Activated CD4-positive, alpha-beta memory T cell treated with anti-CD3 and anti-CD28 coated beads, Interleukin-2, amount 10 ng/mL, durations not matched to agents 7 days and 5 days (primary cell): ENCODE measurements at regions of chr15 and their contacts with region 1.

Region 1: DNA sequence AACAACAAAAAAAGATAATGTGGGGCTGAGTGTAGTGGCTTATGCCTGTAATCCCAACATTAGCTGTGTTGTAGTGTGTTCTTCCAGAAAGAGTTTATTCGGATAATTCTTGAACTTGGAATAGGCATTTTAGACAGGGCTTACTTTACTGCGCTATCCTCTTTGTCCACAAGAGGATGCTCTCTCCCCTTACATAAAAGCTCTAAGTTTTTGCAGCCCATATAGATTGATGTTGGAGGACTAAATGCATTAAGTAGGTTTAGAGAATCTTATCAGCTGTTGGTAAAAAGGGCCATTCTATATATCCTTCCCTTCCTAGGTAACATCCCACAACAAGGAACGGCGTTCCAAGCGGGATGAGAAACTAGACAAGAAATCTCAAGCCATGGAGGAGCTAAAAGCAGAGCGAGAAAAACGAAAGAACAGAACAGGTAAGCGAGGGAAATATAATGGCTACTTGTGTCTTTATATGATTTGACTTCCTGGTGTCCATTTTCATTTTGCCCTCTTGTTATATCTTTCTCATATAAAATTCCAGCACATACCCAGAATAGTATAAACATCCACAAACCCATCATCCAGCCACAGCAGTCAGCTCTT is 27.8 kb upstream of the ITPKA start:
- DNase-seq: peak; percentile 17
- H3K4me3 Mint-ChIP-seq: no peak overlapping the region
- H3K27ac Mint-ChIP-seq: peak overlapping the region; percentile 48
- H3K4me1 Mint-ChIP-seq: peaks cover 14% of the 10 kb centered on the region
- H3K27me3 Mint-ChIP-seq: no peaks in the 10 kb centered on the region

Region 2: DNA sequence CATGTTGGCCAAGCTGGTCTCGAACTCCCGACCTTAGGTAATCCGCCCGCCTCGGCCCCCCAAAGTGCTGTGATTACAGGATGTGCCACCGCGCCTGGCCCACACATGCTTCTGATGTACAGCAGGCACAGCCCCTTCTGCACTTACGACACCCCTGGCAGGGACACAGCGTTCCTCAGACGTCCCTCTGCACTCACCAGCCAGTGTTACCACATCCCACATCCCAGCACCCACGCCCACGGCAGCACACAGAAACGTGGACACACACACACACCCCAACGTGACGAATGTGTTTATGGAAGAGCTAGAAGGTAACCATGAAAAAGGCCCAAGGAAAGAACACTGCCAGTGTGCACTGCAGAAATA is 78.7 kb after region 1 on chr15:
- CTCF ChIA-PET with region 1: interaction called, 10 read pairs
- POLR2A ChIA-PET with region 1: interaction called, 5 read pairs
- DNase-seq: no peak
- H3K4me3 Mint-ChIP-seq: peak overlapping the region; percentile 95
- H3K27ac Mint-ChIP-seq: no peak overlapping the region
- H3K4me1 Mint-ChIP-seq: peaks cover 16% of the 10 kb centered on the region
- H3K27me3 Mint-ChIP-seq: no peaks in the 10 kb centered on the region

Region 3: DNA sequence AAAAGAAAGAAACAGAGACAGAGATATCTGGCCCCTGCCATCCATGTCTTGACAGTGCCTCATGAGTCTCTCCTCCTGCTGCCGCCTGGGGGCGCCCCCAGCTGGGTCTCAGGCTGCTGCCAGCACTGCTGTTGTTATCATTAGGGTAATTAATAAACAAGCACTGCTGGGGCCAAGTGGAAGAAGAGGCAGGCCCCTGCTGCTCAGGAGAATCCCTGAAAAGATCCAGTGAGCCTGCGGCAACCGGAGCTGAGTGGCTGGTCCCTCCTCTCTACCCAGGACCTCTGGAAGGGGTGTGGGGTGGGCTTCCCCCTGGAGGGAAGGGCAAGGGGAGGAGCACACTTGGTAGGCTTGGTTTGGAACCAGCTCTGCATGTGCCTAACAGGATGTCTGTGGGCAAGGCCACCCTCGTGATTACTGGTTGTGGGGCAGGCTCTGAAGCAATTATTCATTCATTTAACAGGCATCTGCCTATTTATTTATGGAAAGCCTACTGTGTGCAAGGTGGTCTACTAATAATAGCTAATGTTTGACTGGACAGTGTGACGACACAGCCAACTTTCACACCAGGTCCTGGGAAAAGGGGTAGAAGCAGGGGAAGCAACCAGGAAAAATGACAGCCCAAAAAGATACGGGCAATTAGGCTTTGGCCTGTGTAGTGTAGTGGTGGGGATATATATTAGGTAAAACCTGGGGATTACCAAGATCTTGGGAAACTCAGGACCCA is 91.9 kb after region 1 on chr15:
- CTCF ChIA-PET with region 1: interaction called, 13 read pairs
- POLR2A ChIA-PET with region 1: no interaction called
- DNase-seq: peak; percentile 77
- H3K4me3 Mint-ChIP-seq: peak overlapping the region; percentile 74
- H3K27ac Mint-ChIP-seq: peak overlapping the region; percentile 68
- H3K4me1 Mint-ChIP-seq: peaks cover 27% of the 10 kb centered on the region
- H3K27me3 Mint-ChIP-seq: peaks cover 38% of the 10 kb centered on the region

Region 4: GRCh38 chr15:41568350-41569017 is 102.6 kb after region 1 on chr15:
- CTCF ChIA-PET with region 1: no interaction called
- POLR2A ChIA-PET with region 1: no interaction called
- DNase-seq: no peak
- H3K4me3 Mint-ChIP-seq: no peak overlapping the region
- H3K27ac Mint-ChIP-seq: no peak overlapping the region
- H3K4me1 Mint-ChIP-seq: no peaks in the 10 kb centered on the region
- H3K27me3 Mint-ChIP-seq: peaks cover 2% of the 10 kb centered on the region

Region 5: DNA sequence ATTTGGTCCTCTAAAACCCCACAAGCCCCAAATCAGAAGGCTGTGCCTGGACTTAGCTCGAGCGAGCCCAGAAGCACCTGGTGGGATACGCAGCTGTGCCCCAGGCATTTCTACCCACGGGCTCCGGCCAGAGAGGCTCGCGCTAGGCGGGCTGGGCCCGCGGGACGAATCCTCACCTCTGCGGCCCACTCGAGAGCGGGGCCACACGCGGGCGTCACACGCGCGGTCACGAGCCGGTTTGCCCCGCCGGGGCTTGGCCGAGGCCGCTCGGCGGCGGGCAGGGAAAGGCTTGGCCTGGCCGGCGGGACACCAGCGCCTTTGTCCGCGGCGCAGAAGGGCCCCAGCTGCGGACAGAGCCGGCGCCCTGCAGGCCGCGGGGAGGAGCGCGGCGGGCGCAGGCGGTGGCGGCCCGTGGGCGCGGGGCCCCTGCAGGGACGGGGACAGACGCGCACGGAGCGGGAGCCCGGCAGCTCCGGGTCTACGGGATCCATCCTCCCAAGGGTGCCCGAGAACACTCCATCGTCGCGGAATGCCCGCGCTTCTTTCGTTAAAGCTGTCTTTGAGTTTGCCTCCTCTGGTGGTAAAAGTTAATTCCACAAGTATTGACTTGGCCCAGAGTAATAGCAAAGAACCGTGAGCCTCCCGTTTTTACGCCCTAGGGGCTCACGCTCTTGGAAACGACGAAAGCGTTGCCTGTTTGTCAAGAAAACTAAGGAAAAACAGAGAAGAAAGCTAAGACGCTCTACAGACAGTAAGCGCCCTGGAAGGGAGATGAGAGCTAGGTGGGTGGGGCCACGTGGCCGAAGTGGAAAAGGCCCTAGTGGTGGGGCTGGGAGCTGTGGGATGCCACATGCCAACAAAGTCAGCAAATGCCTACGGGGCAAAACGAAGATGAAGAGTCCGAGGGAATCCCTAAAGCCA is 119.5 kb after region 1 on chr15:
- CTCF ChIA-PET with region 1: interaction called, 14 read pairs
- POLR2A ChIA-PET with region 1: no interaction called
- DNase-seq: peak; percentile 34
- H3K4me3 Mint-ChIP-seq: peak overlapping the region; percentile 48
- H3K27ac Mint-ChIP-seq: no peak overlapping the region
- H3K4me1 Mint-ChIP-seq: peaks cover 8% of the 10 kb centered on the region
- H3K27me3 Mint-ChIP-seq: peaks cover 49% of the 10 kb centered on the region

Region 6: DNA sequence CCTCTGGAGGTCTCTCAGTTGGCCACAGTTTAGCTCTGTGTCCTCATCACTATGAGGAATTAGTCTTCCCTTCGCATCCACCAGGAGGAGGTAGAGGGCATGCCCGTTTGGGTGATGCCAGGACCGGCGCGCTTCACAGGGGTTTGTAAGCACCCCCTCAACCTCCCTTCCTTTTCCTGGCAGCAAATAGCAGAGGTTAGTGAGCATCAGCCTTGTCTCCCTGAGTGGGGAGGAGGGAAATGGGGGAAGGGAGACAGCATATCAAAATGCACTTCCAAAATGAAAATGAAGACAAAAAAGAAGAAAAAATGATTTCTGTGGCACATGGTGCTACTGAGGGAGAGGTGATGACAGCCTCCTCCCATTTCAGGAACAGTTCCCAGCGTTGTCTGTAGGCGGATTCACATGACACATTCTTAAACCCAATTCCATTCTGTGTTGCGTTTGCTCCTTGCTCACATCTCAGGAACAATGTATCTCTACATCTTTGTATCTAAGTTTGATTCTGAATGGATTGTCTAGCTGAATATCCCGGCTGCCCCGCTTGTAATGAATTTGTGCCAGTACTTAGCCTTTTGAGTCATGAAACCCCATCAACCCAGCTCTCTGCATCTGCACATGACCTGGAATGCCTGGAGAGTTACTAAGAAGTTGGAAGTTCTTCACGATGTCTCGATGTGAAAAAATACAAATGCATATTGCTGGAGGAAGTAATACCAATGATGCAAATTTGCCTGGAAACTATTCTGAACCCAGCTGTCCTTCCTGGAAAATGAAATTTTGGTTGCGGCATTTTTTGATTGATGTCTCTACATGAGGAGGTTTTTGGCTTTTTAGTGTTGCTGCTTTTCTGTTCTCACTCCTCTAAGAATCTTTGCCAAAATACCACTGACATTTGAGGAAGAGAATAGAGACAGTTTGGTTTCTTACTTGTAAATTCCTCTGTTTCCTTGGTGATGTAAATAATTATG is 138.3 kb after region 1 on chr15:
- CTCF ChIA-PET with region 1: interaction called, 10 read pairs
- POLR2A ChIA-PET with region 1: no interaction called
- DNase-seq: peak; percentile 50
- H3K4me3 Mint-ChIP-seq: peak overlapping the region; percentile 33
- H3K27ac Mint-ChIP-seq: no peak overlapping the region
- H3K4me1 Mint-ChIP-seq: peaks cover 9% of the 10 kb centered on the region
- H3K27me3 Mint-ChIP-seq: peaks cover 39% of the 10 kb centered on the region

Region 7: DNA sequence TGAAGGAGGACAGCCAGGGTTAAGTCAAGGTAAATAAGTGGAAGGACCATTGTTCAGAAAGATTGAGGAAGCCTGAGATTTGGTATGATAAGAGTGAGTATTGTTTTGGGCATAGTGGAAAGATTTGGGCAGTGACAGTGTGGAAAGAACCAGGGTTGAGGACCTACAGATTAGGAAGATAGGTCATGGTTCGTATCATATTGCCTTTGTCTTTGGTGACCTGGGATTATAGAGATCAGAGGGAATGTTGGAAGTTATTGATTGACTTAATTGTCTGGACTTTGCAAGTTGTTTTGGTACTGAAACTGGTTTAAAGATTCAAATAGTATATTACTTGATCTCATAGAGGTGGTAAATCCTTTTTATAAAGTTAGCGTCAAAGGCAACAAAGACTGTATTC is 171.2 kb after region 1 on chr15:
- CTCF ChIA-PET with region 1: no interaction called
- POLR2A ChIA-PET with region 1: no interaction called
- DNase-seq: no peak
- H3K4me3 Mint-ChIP-seq: no peak overlapping the region
- H3K27ac Mint-ChIP-seq: no peak overlapping the region
- H3K4me1 Mint-ChIP-seq: peaks cover 4% of the 10 kb centered on the region
- H3K27me3 Mint-ChIP-seq: no peaks in the 10 kb centered on the region